H1 (cell line): ENCODE measurements at regions of chr6 and their contacts with region 1.

Region 1: DNA sequence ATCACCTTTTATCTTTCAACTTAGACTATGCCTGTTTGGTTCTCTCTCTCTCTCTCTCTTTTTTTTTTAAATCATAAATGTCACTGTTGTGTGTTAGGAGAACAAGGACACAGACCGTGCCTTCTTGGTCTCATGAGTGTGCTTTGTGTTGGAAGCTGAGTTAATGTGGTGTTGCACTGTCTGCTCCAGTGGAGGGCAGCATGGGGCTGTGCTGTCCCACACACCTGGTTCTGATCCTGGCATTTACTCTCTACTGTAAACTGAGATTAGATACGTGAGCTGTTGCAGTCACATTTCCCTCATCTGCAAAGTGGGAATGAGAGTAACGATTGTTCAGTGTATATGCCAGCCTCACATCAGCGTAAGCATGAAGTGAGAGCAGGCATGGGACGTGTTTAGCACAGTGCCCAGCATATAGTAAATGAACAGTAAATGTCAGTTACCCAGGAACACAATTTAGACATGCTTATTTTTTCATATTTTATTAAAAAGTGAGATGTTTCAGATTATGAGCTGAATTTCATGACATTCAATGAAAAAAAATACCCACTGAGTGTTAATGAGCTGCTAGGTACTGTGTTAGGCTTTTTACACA is 161.1 kb downstream of the FARS2 start:
- DNase-seq: peak; percentile 38 to 57
- H3K4me3 ChIP-seq: no peak overlapping the region
- H3K27ac ChIP-seq: no peak overlapping the region
- H3K4me1 ChIP-seq: peaks cover 0 to 2% (median 0%) of the 10 kb centered on the region in 4 experiments; a peak in 1 of 7 replicates
- H3K27me3 ChIP-seq: no peaks in the 10 kb centered on the region
- CTCF ChIP-seq: peak; percentile 76 to 94 (median 94)
- EP300 ChIP-seq: no peak
- POLR2A ChIP-seq: no peak
- RAD21 ChIP-seq: peak; percentile 95 to 97

Region 2: GRCh38 chr6:5361396-5361795 is 61.0 kb before region 1 on chr6:
- CTCF ChIA-PET with region 1: no interaction called
- POLR2A ChIA-PET with region 1: no interaction called
- DNase-seq: no peak
- H3K4me3 ChIP-seq: no peak overlapping the region
- H3K27ac ChIP-seq: no peak overlapping the region
- H3K4me1 ChIP-seq: no peaks in the 10 kb centered on the region
- H3K27me3 ChIP-seq: no peaks in the 10 kb centered on the region
- CTCF ChIP-seq: no peak
- EP300 ChIP-seq: no peak
- POLR2A ChIP-seq: no peak
- RAD21 ChIP-seq: no peak

Region 3: DNA sequence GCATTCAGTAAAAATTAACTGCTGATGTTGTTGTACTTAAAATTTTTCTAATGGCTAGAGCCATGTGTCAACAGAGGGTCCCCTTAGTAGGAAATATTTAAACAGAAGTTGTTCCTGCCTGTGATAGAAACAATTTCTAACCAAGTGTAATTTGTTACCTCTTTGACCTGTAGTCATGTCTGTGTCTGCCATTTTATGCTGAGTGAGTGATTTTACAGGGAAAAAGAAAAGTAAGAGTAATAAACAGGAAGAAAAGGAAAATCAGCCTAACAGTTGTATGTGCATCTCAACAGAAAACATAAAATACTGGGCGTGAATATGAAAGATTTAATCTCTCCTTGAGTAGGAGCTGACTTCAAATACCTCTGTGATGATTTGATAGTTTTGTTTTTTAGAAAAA is 10.9 kb after region 1 on chr6:
- CTCF ChIA-PET with region 1: interaction called, 11 read pairs
- POLR2A ChIA-PET with region 1: no interaction called
- DNase-seq: no peak
- H3K4me3 ChIP-seq: no peak overlapping the region
- H3K27ac ChIP-seq: no peak overlapping the region
- H3K4me1 ChIP-seq: peaks cover 0 to 4% (median 0%) of the 10 kb centered on the region in 4 experiments; a peak in 2 of 7 replicates
- H3K27me3 ChIP-seq: no peaks in the 10 kb centered on the region
- CTCF ChIP-seq: no peak
- EP300 ChIP-seq: no peak
- POLR2A ChIP-seq: no peak
- RAD21 ChIP-seq: no peak